PC-9 (cell line): ENCODE measurements at regions of chr1 and their contacts with region 1.

Region 1: DNA sequence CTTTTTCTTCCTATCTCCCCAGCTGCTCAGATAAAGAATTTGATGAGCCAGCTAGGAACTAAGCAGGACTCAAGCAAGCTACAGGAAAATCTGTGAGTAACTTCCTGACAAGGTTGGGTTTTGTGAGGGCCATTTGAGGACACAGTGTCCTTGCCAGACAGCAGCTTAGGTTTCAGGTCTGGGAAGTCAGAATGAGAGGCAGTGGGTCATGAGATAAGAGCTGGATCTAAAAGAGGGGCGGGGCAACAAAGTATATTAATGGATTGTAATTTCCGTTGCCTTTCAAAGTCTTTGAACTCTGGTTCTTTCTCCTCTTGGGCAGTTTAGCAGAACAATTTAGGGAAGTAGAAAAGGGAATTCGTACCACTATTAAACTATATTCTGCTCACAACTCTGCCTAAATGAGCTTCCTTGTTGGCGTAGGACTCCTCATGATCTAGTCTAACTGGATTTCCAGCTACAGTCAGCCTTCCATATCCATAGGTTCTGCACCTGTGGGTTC is 16.6 kb downstream of the STX12 start:
- DNase-seq: no peak
- H3K4me3 ChIP-seq: no peak overlapping the region
- H3K27ac ChIP-seq: no peak overlapping the region
- H3K4me1 ChIP-seq: peaks cover 9% of the 10 kb centered on the region
- H3K27me3 ChIP-seq: no peaks in the 10 kb centered on the region
- CTCF ChIP-seq: no peak

Region 2: GRCh38 chr1:27849951-27850350 is 60.4 kb after region 1 on chr1:
- CTCF ChIA-PET with region 1: no interaction called
- POLR2A ChIA-PET with region 1: interaction called, 10 read pairs
- intact Hi-C with region 1: no loop called
- DNase-seq: no peak
- H3K4me3 ChIP-seq: no peak overlapping the region
- H3K27ac ChIP-seq: no peak overlapping the region
- H3K4me1 ChIP-seq: no peaks in the 10 kb centered on the region
- H3K27me3 ChIP-seq: no peaks in the 10 kb centered on the region
- CTCF ChIP-seq: no peak